Activated CD4-positive, alpha-beta T cell treated with anti-CD3 and anti-CD28 coated beads for 36 hours (primary cell): ENCODE measurements at regions of chr11 and their contacts with region 1.

Region 1: DNA sequence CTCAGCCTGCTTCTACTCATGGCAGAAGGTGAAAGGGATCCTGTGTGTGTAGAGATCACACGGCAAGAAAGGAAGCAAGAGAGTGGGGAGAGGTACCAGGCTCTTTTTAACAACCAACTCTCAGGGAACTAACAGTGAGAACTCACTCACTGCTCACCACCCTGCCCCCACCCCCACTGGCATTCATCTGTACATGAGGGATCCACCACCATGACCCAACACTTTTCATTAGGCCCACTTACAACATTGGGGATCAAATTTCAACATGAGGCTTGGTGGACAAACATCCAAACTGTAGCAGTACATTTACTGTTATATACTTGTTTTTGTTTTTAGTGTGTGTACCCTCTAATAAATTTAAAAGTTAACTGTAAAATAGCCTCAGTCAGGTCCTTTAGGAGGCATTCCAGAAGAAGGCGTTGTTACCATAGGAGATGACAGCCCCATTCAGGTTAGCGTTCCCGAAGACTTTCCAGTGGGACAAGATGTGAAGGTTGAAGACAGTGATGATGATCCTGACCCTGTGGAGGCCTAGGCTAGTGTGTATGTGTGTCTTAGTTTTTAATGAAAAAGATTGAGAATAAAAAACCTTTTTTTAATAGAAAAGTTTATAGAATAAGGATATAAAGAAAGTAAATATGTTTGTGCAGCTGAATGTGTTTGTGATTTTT is 11.3 kb downstream of the CUL5 start:
- DNase-seq: no peak
- ATAC-seq: no peak
- H3K4me3 Mint-ChIP-seq: no peak overlapping the region
- H3K27ac Mint-ChIP-seq: no peak overlapping the region
- H3K4me1 Mint-ChIP-seq: peaks cover 56% of the 10 kb centered on the region
- H3K27me3 Mint-ChIP-seq: no peaks in the 10 kb centered on the region

Region 2: DNA sequence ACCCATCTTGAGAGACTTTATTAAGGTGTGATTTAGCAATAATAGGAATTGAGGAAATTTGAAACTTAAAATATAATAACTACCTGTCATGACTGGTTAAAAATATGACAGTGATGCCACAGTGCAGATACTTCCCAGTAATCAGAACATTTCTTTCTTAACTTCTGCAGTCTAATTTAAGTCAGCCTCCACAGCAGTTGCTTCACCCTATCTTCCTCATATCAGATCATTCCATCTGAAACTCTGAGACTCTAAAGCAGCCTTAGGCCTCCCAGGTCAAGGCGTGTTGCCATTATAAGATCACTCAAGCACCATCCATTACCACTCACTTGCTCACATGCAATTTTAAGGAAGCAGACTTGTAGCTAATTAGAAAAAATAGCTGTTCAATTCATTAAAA is 1640.3 kb before region 1 on chr11:
- CTCF ChIA-PET with region 1: no interaction called
- POLR2A ChIA-PET with region 1: no interaction called
- intact Hi-C with region 1: loop called in 1 of 2 experiments (anchors 5 kb)
- DNase-seq: no peak
- ATAC-seq: no peak
- H3K4me3 Mint-ChIP-seq: no peak overlapping the region
- H3K27ac Mint-ChIP-seq: no peak overlapping the region
- H3K4me1 Mint-ChIP-seq: no peaks in the 10 kb centered on the region
- H3K27me3 Mint-ChIP-seq: no peaks in the 10 kb centered on the region